ENCODE measurements at regions of chr20 and their contacts with region 1.

Region 1: DNA sequence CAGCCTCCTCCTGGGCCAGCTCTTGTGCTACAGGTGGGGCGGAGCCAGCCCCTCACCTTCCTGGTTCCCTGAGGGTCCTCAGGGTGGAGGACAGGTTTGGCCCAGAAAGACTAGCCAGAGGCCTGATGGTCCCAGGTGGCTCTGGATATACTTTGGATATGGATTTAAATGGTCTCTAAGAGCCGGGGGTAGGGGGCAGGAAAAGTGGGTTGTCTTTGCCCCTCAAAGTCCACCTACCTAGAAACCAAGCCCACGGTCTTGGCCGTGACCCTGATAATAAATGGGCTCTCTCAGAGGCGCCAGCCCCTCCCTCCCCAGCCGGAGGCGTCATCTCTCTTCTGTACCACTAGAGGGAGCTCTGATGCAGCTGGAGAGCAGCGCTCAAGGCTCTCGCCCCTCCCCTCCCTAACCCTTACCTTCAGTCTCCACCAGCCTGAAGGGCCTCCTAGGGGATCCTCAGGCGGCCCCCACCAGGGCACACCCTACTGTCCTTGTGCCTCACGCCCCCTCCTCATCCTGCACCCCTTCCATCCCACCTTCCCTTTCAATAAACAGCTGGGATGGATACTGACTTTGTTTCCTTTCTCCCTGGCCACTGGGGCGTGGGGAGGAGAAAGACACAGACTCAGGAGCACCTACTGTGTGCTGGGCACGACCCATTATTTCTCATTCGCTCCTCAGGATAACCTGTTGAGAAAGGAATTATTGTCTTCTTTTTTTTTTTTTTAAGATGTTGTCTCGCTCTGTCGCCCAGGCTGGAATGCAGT is 7.6 kb downstream of the NRSN2 start:
- DNase-seq: peak; percentile 83
- H3K4me3 Mint-ChIP-seq: no peak overlapping the region
- H3K27ac Mint-ChIP-seq: no peak overlapping the region
- H3K4me1 Mint-ChIP-seq: peaks cover 15% of the 10 kb centered on the region
- H3K27me3 Mint-ChIP-seq: peaks cover 4% of the 10 kb centered on the region

Region 2: DNA sequence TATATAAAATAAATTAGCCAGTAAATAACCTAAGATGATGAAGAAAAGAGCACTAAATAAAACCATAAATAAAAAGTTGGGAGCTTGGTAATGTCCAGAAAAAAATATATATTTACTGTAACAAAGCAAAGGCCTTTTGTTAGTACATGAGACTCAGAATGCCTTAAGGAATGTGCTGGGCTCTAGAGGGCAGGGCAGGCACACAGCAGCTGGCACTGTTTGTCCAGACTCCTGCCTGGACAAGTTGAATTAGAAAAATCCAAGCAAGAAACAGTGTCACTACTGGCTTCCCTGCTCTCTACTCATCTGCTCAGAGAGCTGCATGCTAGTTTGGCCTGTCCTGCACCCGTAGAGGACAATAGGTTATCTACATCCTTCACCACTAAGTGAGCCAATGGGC is 118.6 kb before region 1 on chr20:
- CTCF ChIA-PET with region 1: no interaction called
- POLR2A ChIA-PET with region 1: no interaction called
- DNase-seq: no peak
- H3K4me3 Mint-ChIP-seq: no peak overlapping the region
- H3K27ac Mint-ChIP-seq: no peak overlapping the region
- H3K4me1 Mint-ChIP-seq: peaks cover 22% of the 10 kb centered on the region
- H3K27me3 Mint-ChIP-seq: peaks cover 5% of the 10 kb centered on the region

Region 3: GRCh38 chr20:381581-382290 is 27.3 kb after region 1 on chr20:
- CTCF ChIA-PET with region 1: interaction called, 10 read pairs
- POLR2A ChIA-PET with region 1: interaction called, 3 read pairs
- DNase-seq: peak; percentile 88
- H3K4me3 Mint-ChIP-seq: peak overlapping the region; percentile 77
- H3K27ac Mint-ChIP-seq: peak overlapping the region; percentile 76
- H3K4me1 Mint-ChIP-seq: peaks cover 20% of the 10 kb centered on the region
- H3K27me3 Mint-ChIP-seq: no peaks in the 10 kb centered on the region

Region 4: DNA sequence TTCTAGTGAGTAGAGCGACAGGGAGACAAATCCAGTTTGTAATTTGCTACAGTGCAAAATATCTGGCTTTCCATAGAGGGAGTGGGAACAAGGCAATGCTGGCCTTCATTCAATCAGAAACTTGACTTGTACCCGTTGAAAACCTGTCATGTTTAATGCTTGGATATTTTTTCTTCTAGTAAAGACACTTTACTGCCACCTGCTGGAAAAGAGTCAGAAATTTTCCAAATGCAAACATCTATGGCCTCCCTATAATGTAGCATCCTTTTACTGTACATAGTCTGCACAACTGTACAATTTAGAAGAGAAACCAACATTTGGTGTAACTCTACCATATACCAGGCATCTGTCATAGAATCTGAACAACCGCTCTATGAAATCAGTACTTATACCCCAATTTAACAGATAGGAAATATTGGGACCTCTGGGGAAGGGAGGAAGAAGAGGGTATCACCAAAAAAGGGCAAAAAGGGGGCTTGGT is 124.5 kb after region 1 on chr20:
- CTCF ChIA-PET with region 1: interaction called, 46 read pairs
- POLR2A ChIA-PET with region 1: interaction called, 6 read pairs
- DNase-seq: peak; percentile 22
- H3K4me3 Mint-ChIP-seq: no peak overlapping the region
- H3K27ac Mint-ChIP-seq: peak overlapping the region; percentile 36
- H3K4me1 Mint-ChIP-seq: peaks cover 16% of the 10 kb centered on the region
- H3K27me3 Mint-ChIP-seq: no peaks in the 10 kb centered on the region

Measured in activated CD4-positive, alpha-beta memory T cell treated with anti-CD3 and anti-CD28 coated beads, Interleukin-2, amount 10 ng/mL, durations not matched to agents 7 days and 5 days (primary cell).